PC-3 (cell line): ENCODE measurements at regions of chr19 and their contacts with region 1.

Region 1: GRCh38 chr19:8269724-8270123 is 38.4 kb downstream of the CD320 start:
- DNase-seq: no peak
- ATAC-seq: no peak
- H3K4me3 ChIP-seq: peak overlapping the region; percentile 79; the same call in 1 of the 2 replicates
- H3K27ac ChIP-seq: no peak overlapping the region
- H3K4me1 ChIP-seq: no peaks in the 10 kb centered on the region
- H3K27me3 ChIP-seq: no peaks in the 10 kb centered on the region
- CTCF ChIP-seq: no peak

Region 2: GRCh38 chr19:8045872-8046568 is 223.7 kb before region 1 on chr19:
- CTCF ChIA-PET with region 1: interaction called, 15 read pairs
- POLR2A ChIA-PET with region 1: no interaction called
- intact Hi-C with region 1: no loop called
- DNase-seq: no peak
- ATAC-seq: no peak
- H3K4me3 ChIP-seq: no peak overlapping the region
- H3K27ac ChIP-seq: no peak overlapping the region
- H3K4me1 ChIP-seq: no peaks in the 10 kb centered on the region
- H3K27me3 ChIP-seq: no peaks in the 10 kb centered on the region
- CTCF ChIP-seq: no peak

Region 3: GRCh38 chr19:8308891-8309291 is 39.2 kb after region 1 on chr19:
- CTCF ChIA-PET with region 1: no interaction called
- POLR2A ChIA-PET with region 1: no interaction called
- intact Hi-C with region 1: no loop called
- DNase-seq: no peak
- ATAC-seq: no peak
- H3K4me3 ChIP-seq: 0 out of 2 replicates have a peak overlapping the region, but pooled peaks have one; percentile 25
- H3K27ac ChIP-seq: peak overlapping the region; percentile 79
- H3K4me1 ChIP-seq: peaks cover 44% of the 10 kb centered on the region
- H3K27me3 ChIP-seq: no peaks in the 10 kb centered on the region
- CTCF ChIP-seq: no peak